Naive thymus-derived CD4-positive, alpha-beta T cell (primary cell): ENCODE measurements at regions of chr12 and their contacts with region 1.

Region 1: DNA sequence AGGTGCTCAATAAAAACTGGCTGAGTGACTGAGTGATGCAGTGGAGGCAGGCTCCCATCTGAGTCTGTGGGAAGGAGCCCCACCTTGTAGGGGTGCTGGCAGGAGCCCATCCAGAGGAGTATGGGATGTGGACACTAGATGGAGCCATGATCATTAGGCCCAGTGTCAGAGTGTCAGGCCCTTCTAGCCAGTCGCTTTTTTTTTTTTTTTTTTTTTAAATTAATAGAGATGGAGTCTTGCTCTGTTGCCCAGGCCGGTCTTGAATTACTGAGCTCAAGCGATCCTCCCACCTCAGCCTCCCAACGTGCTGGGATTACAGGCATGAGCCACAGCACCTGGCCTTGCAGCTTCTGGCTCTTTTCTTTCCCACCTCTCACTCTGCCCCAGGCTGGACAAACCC is 11.5 kb downstream of the RITA1 start:
- DNase-seq: peak in 8 of 9 donors; percentile 42 to 69 (median 57)
- ATAC-seq: peak; percentile 99
- H3K4me3 ChIP-seq: no peak overlapping the region
- H3K4me3 Mint-ChIP-seq: no peak overlapping the region
- H3K27ac ChIP-seq: no peak overlapping the region
- H3K27ac Mint-ChIP-seq: peak overlapping the region in 1 of 9 donors; percentile 13
- H3K4me1 ChIP-seq: no peaks in the 10 kb centered on the region
- H3K4me1 Mint-ChIP-seq: peaks cover 0 to 16% (median 4%) of the 10 kb centered on the region in 7 donors
- H3K27me3 ChIP-seq: no peaks in the 10 kb centered on the region
- H3K27me3 Mint-ChIP-seq: no peaks in the 10 kb centered on the region

Region 2: DNA sequence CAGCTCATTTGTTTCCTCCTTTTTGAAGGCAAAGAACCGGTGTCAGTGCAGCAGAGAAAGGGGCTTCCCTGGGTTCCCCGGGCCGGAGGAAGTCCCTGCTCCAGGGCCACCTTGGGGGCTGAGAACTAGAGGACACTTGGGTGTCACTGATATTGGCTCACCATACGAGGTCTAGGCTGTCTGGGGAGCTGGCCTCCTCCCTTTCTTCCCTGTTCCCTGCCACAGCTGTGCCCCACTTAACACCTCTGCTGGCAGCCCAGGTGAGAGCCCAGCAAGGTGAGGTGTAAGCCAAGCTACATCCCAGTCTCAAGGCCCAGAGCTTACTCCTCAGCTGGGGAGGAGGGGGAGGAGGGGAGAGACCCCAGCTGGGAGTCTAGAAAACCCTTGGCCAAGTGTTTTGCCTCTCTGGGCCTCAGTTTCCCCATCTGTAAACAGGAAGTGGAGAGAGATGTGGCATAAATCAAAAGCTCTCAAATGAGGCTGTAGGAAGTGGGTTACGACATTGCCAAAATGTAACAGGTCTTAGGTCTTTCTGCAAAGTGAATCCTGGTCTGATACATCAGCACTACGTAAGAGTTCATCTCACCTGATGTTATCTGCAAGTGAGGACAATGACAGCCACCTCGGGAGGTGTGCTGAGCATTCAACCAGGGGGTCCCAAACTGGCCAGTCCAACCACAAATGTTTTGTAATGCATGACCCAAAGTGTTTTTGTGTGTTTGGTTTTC is 87.0 kb before region 1 on chr12:
- CTCF ChIA-PET with region 1: no interaction called
- POLR2A ChIA-PET with region 1: no interaction called
- intact Hi-C with region 1: no loop called
- DNase-seq: no peak
- ATAC-seq: peak; percentile 34
- H3K4me3 ChIP-seq: no peak overlapping the region
- H3K4me3 Mint-ChIP-seq: no peak overlapping the region
- H3K27ac ChIP-seq: no peak overlapping the region
- H3K27ac Mint-ChIP-seq: peak overlapping the region in 3 of 9 donors; percentile 1 to 68 (median 24)
- H3K4me1 ChIP-seq: peaks cover 0 to 6% of the 10 kb centered on the region in 2 donors
- H3K4me1 Mint-ChIP-seq: peaks cover 0 to 14% (median 10%) of the 10 kb centered on the region in 7 donors
- H3K27me3 ChIP-seq: no peaks in the 10 kb centered on the region
- H3K27me3 Mint-ChIP-seq: peaks cover 0 to 3% (median 0%) of the 10 kb centered on the region in 5 donors

Region 3: GRCh38 chr12:113232840-113233585 is 36.0 kb after region 1 on chr12:
- CTCF ChIA-PET with region 1: interaction called, 7 read pairs
- POLR2A ChIA-PET with region 1: no interaction called
- intact Hi-C with region 1: loop called in 1 of 2 experiments (anchors 1 kb)
- DNase-seq: peak; percentile 46 to 91 (median 83)
- ATAC-seq: peak; percentile 95
- H3K4me3 ChIP-seq: peak overlapping the region; percentile 43
- H3K4me3 Mint-ChIP-seq: peak overlapping the region; percentile 81 to 94 (median 86)
- H3K27ac ChIP-seq: peak overlapping the region; percentile 68
- H3K27ac Mint-ChIP-seq: peak overlapping the region; percentile 86 to 96 (median 93)
- H3K4me1 ChIP-seq: peaks cover 7 to 60% of the 10 kb centered on the region in 2 donors
- H3K4me1 Mint-ChIP-seq: peaks cover 59 to 93% (median 75%) of the 10 kb centered on the region in 7 donors
- H3K27me3 ChIP-seq: no peaks in the 10 kb centered on the region
- H3K27me3 Mint-ChIP-seq: no peaks in the 10 kb centered on the region

Region 4: DNA sequence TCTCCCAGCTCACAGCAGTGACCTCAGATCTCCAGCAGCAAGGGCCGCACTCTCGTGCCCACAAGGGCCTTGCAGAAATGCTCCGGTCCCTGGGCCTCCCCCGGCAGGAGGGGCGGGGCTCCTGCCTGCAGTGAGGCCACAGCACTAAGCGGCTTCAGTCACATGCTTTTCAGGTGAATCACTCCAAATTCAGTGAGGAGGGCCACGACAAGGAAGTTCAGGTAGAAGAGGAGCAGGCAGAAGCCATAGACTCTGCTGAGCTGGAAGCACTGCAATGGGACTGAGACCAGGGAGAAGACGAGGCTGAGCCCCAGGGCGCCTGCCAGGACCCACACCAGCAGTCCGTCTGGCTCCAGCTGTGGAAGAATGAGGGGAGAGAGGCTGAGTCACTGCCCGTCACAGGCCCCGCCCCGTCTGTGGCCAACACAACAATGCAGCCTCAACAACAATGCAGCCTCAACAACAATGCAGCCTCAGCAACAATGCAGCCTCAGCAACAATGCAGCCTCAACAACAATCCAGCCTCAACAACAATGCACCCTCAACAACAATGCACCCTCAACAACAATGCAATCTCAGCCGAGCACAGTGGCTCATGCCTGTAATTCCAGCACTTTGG is 102.7 kb after region 1 on chr12:
- CTCF ChIA-PET with region 1: no interaction called
- POLR2A ChIA-PET with region 1: no interaction called
- intact Hi-C with region 1: loop called in 1 of 2 experiments (anchors 2 kb)
- DNase-seq: no peak
- ATAC-seq: no peak
- H3K4me3 ChIP-seq: no peak overlapping the region
- H3K4me3 Mint-ChIP-seq: no peak overlapping the region
- H3K27ac ChIP-seq: no peak overlapping the region
- H3K27ac Mint-ChIP-seq: peak overlapping the region in 4 of 9 donors; percentile 58 to 69 (median 64)
- H3K4me1 ChIP-seq: peaks cover 0 to 14% of the 10 kb centered on the region in 2 donors
- H3K4me1 Mint-ChIP-seq: peaks cover 11 to 24% (median 18%) of the 10 kb centered on the region in 7 donors
- H3K27me3 ChIP-seq: no peaks in the 10 kb centered on the region
- H3K27me3 Mint-ChIP-seq: no peaks in the 10 kb centered on the region

Region 5: GRCh38 chr12:113422030-113422885 is 225.3 kb after region 1 on chr12 and contains the start of gene SDSL:
- CTCF ChIA-PET with region 1: interaction called, 4 read pairs
- POLR2A ChIA-PET with region 1: no interaction called
- intact Hi-C with region 1: loop called in 1 of 2 experiments (anchors 1 kb)
- DNase-seq: peak in 2 of 9 donors; percentile 11 to 38
- ATAC-seq: peak; percentile 91
- H3K4me3 ChIP-seq: no peak within 1 kb of the TSS
- H3K4me3 Mint-ChIP-seq: peak within 1 kb of the TSS in 5 of 10 donors; percentile 44 to 96 (median 89)
- H3K27ac ChIP-seq: no peak within 1 kb of the TSS
- H3K27ac Mint-ChIP-seq: peak within 1 kb of the TSS in 2 of 9 donors; percentile 58 to 91
- H3K4me1 ChIP-seq: no peaks in the 10 kb centered on the region
- H3K4me1 Mint-ChIP-seq: peaks cover 0 to 18% (median 7%) of the 10 kb centered on the region in 7 donors
- H3K27me3 ChIP-seq: no peaks in the 10 kb centered on the region
- H3K27me3 Mint-ChIP-seq: peaks cover 0 to 11% (median 0%) of the 10 kb centered on the region in 5 donors
- total RNA-seq, gene SDSL: 0.46 to 2.5 (median 1.7) TPM in 4 of 5 experiments, not detected in the other